ENCODE measurements at regions of chr11 and their contacts with region 1.

Region 1: GRCh38 chr11:10366568-10367370 is 61.9 kb downstream of the ADM start:
- DNase-seq: peak; percentile 87
- H3K4me3 Mint-ChIP-seq: peak overlapping the region; percentile 7
- H3K27ac Mint-ChIP-seq: no peak overlapping the region
- H3K4me1 Mint-ChIP-seq: peaks cover 6% of the 10 kb centered on the region
- H3K27me3 Mint-ChIP-seq: peaks cover 9% of the 10 kb centered on the region

Region 2: DNA sequence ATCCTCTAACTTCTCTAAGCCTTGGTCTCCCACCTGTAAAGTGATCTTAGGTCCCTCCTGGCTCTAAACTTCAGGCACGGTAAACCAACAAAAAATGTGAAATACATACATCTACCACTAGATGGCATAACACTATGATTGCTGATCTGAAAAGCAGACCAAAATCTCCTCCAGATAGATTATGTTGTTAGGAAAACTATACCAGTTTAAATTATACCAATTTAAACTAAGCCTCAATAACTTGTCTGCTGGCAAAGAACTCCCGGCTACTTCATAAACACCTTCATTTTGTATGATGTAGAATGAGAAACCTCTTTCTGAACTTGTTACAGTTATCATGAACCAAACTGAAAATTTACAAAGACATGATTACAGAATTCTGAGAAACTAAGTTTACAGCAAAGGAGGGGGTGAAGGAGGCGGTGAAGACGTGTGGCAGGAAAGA is 158.6 kb before region 1 on chr11:
- CTCF ChIA-PET with region 1: interaction called, 5 read pairs
- intact Hi-C with region 1: loop called (anchors 1 kb)
- DNase-seq: no peak
- H3K4me3 Mint-ChIP-seq: no peak overlapping the region
- H3K27ac Mint-ChIP-seq: no peak overlapping the region
- H3K4me1 Mint-ChIP-seq: no peaks in the 10 kb centered on the region
- H3K27me3 Mint-ChIP-seq: no peaks in the 10 kb centered on the region

Region 3: DNA sequence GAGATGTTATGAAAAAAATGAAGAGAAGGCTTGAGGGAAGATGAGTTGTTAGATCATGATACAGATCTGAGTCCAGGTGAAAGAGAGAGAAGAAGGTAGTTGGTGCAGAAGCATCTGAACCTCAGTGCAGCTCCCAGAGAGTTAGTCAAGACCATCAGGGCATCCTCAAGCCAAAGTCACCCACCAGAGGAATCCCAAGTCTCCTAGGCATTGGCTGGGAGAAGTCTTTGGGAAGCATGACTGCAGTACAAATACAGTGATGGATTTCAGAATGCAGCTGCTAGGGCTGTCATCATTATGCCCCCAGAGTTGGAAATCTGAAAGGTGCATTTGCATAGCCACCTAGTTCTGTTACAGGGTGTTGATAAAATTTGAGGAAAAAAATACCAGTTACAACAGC is 1314.8 kb after region 1 on chr11:
- CTCF ChIA-PET with region 1: no interaction called
- intact Hi-C with region 1: no loop called
- DNase-seq: no peak
- H3K4me3 Mint-ChIP-seq: no peak overlapping the region
- H3K27ac Mint-ChIP-seq: no peak overlapping the region
- H3K4me1 Mint-ChIP-seq: no peaks in the 10 kb centered on the region
- H3K27me3 Mint-ChIP-seq: peaks cover 20% of the 10 kb centered on the region